Pancreas (tissue), 10 donors: ENCODE measurements at regions of chr11 and their contacts with region 1.

Region 1: DNA sequence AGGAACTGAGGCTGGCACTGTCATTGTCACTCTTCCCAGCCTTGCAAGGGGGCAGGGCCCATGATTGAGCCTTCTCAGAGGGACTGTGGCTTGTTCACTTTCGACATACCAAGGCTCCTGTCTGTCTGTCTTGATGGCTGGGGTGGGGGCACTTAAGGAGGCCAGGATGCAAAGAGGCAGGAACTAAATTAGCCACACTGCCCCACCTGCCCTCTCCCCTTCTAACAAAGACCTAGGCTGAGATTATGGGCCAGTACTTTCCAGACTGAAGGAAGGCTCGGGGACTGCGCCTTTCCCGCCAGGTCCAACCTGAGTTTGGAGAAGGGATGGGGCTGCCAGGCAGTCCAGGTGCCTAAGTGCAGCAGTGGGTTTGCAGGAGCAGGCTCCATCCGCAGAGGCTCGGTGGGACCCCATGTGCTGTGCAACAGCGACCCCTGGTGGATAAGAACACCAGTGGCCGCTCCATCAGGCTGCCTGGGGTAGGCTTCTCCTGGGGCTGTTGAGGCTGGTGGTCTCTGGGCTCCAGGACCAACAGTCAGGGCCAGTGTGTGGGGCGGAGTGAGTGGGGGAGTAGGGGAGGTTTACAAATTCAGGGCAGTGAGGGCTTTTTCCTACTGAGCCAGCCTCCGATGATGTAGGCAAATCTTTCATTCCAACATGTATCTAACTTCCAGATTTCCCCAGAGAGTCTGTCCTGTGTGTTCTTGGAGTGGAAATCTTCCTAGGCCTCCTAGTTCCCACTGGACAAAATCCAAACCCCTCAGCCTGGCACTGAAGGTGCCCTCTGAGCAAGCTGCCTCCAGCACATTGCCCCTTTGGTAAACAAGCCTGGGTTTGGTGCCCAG is 93.9 kb downstream of the INSC start:
- DNase-seq: peak; percentile 54 to 91 (median 80)
- ATAC-seq: peak; percentile 94 to 100 (median 98)
- H3K4me3 ChIP-seq: no peak overlapping the region
- H3K27ac ChIP-seq: no peak overlapping the region
- H3K4me1 ChIP-seq: no peaks in the 10 kb centered on the region
- H3K27me3 ChIP-seq: no peaks in the 10 kb centered on the region
- CTCF ChIP-seq: peak; percentile 85 to 96 (median 94)

Region 2: GRCh38 chr11:15095736-15096228 is 112.8 kb before region 1 on chr11:
- intact Hi-C with region 1: loop called (anchors 2 to 5 kb)
- DNase-seq: no peak
- ATAC-seq: no peak
- H3K4me3 ChIP-seq: no peak overlapping the region
- H3K27ac ChIP-seq: no peak overlapping the region
- H3K4me1 ChIP-seq: no peaks in the 10 kb centered on the region
- H3K27me3 ChIP-seq: no peaks in the 10 kb centered on the region
- CTCF ChIP-seq: no peak

Region 3: DNA sequence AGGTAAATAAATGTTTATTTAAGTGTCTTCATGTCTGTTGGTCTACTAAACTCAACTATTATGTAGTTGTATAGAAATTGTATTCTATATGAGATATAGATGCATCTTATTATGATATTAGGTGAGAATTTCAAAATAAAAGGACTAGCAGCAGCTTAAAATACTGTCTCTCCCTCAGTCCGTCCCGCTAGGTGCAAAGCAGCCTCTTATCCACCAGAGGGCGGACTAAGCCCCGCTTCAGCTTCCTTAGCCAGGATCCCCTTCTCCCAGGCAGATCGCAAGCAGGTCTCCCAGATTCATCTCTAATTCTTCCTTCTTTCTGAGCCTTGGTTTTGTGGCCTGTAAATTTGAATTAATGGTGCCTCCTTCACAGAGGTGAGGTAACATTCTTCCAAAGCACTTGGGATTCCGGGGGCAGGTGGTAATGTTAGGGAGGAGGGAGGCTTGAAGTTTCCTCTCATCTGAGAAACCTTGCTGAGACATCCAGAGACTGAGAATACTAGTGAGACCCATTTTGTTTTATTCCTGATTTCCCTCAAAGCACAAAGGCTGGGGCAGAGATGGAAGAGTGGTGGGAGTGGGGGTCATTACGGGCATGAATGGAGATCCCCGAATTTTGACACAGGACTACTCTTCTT is 107.4 kb before region 1 on chr11:
- intact Hi-C with region 1: loop called (anchors 2 to 5 kb)
- DNase-seq: peak; percentile 36 to 82 (median 67)
- ATAC-seq: peak; percentile 84 to 99 (median 98)
- H3K4me3 ChIP-seq: no peak overlapping the region
- H3K27ac ChIP-seq: no peak overlapping the region
- H3K4me1 ChIP-seq: no peaks in the 10 kb centered on the region
- H3K27me3 ChIP-seq: no peaks in the 10 kb centered on the region
- CTCF ChIP-seq: peak; percentile 75 to 94 (median 88)

Region 4: GRCh38 chr11:15327786-15328231 is 119.2 kb after region 1 on chr11:
- intact Hi-C with region 1: no loop called
- DNase-seq: peak; percentile 27 to 69 (median 52)
- ATAC-seq: peak; percentile 63 to 92 (median 88)
- H3K4me3 ChIP-seq: no peak overlapping the region
- H3K27ac ChIP-seq: no peak overlapping the region
- H3K4me1 ChIP-seq: no peaks in the 10 kb centered on the region
- H3K27me3 ChIP-seq: no peaks in the 10 kb centered on the region
- CTCF ChIP-seq: peak in 3 of 4 donors; percentile 33 to 47 (median 44)